Activated CD4-positive, alpha-beta memory T cell treated with anti-CD3 and anti-CD28 coated beads for 36 hours (primary cell): ENCODE measurements at regions of chr17 and their contacts with region 1.

Region 1: DNA sequence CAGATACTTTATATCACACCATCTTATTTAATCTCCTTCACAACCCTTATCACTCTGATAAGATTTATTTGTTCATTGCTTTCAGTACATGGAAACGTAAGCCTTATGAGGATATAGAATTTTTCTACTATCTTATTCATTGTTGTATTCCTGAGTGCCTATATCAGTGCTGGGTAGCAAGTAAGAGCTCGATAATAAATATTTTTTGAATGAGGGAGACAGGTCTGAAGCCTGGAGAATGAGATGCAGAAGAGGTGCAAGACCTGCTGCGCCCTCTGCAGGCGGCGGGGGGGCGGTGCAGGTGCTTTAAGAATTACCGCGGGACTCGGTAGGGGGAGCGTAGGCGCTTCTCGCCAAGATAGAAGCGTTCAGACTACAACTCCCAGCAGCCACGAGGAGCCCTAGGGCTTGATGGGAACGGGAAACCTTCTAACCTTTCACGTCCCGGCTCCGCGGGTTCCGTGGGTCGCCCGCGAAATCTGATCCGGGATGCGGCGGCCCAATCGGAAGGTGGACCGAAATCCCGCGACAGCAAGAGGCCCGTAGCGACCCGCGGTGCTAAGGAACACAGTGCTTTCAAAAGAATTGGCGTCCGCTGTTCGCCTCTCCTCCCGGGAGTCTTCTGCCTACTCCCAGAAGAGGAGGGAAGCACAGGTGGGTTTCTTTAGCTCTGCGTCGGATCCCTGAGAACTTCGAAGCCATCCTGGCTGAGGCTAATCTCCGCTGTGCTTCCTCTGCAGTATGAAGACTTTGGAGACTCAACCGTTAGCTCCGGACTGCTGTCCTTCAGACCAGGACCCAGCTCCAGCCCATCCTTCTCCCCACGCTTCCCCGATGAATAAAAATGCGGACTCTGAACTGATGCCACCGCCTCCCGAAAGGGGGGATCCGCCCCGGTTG is at the start of gene WRAP53:
- DNase-seq: peak; percentile 98
- H3K4me3 Mint-ChIP-seq: peak within 1 kb of the TSS; percentile 100
- H3K27ac Mint-ChIP-seq: peak within 1 kb of the TSS; percentile 100
- H3K4me1 Mint-ChIP-seq: peaks cover 31% of the 10 kb centered on the region
- H3K27me3 Mint-ChIP-seq: no peaks in the 10 kb centered on the region
- total RNA-seq, gene WRAP53: 20.2 to 23.3 TPM

Region 2: GRCh38 chr17:7252176-7253043 is 435.7 kb before region 1 on chr17 and contains the start of gene ELP5:
- CTCF ChIA-PET with region 1: no interaction called
- POLR2A ChIA-PET with region 1: interaction called, 3 read pairs
- intact Hi-C with region 1: loop called (anchors 5 kb)
- DNase-seq: peak; percentile 94
- H3K4me3 Mint-ChIP-seq: peak within 1 kb of the TSS; percentile 96
- H3K27ac Mint-ChIP-seq: peak within 1 kb of the TSS; percentile 100
- H3K4me1 Mint-ChIP-seq: peaks cover 40% of the 10 kb centered on the region
- H3K27me3 Mint-ChIP-seq: no peaks in the 10 kb centered on the region
- total RNA-seq, gene ELP5: 49.6 to 52.4 TPM

Region 3: GRCh38 chr17:7416323-7416722 is 271.8 kb before region 1 on chr17:
- CTCF ChIA-PET with region 1: no interaction called
- POLR2A ChIA-PET with region 1: no interaction called
- intact Hi-C with region 1: no loop called
- DNase-seq: no peak
- H3K4me3 Mint-ChIP-seq: no peak overlapping the region
- H3K27ac Mint-ChIP-seq: no peak overlapping the region
- H3K4me1 Mint-ChIP-seq: no peaks in the 10 kb centered on the region
- H3K27me3 Mint-ChIP-seq: no peaks in the 10 kb centered on the region

Region 4: DNA sequence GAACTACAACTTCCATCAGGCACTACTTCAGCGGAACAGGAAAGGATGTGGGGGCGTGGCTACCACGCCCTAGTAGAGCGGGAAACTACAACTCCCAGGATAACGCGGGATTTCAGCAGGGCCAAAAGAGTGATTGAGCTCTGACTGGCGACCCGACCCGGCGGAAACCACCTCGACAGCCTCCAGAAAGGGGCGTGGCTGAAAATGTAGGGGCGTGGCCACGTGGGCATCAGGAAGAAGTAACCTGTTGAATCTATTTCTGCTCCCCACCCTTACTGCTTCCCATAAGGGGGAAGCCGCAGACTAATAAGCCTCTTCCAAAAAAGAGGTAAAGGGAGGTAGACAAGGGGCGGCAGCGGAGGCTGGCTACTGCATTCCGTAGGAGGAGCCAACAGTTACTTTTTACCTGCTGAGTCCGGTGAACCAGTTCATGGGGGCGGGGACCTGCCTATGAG is 252.9 kb before region 1 on chr17 and contains the start of gene TMEM102:
- CTCF ChIA-PET with region 1: interaction called, 10 read pairs
- POLR2A ChIA-PET with region 1: interaction called, 22 read pairs
- intact Hi-C with region 1: loop called (anchors 1 kb)
- DNase-seq: peak; percentile 99
- H3K4me3 Mint-ChIP-seq: peak within 1 kb of the TSS; percentile 91
- H3K27ac Mint-ChIP-seq: peak within 1 kb of the TSS; percentile 95
- H3K4me1 Mint-ChIP-seq: peaks cover 36% of the 10 kb centered on the region
- H3K27me3 Mint-ChIP-seq: peaks cover 15% of the 10 kb centered on the region
- total RNA-seq, gene TMEM102: 11.4 to 11.6 TPM

Region 5: GRCh38 chr17:7583253-7584109 is 104.7 kb before region 1 on chr17 and contains the start of gene MPDU1:
- CTCF ChIA-PET with region 1: interaction called, 30 read pairs
- POLR2A ChIA-PET with region 1: interaction called, 56 read pairs
- intact Hi-C with region 1: loop called (anchors 1 kb)
- DNase-seq: peak; percentile 98
- H3K4me3 Mint-ChIP-seq: peak within 1 kb of the TSS; percentile 95
- H3K27ac Mint-ChIP-seq: peak within 1 kb of the TSS; percentile 100
- H3K4me1 Mint-ChIP-seq: peaks cover 57% of the 10 kb centered on the region
- H3K27me3 Mint-ChIP-seq: no peaks in the 10 kb centered on the region
- total RNA-seq, gene MPDU1: 52.6 to 52.9 TPM

Region 6: DNA sequence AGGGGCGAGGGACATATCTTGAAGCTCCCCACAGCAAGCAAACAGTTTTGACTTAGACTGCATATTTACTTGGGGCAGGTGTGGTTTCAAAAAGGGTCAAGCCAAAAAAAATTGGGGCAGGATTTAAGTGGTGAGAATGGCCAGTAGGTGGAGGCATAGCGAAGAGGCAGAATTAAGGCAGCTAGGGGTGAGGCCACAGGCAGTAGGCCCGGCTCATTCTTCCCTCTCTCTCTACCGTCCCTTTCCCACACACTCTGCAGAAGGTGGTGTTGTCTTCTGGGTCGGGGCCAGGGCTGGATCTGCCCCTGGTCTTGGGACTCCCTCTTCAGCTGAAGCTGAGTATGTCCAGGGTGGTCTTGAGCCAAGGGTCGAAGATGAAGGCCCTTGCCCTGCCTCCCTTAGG is 55.7 kb before region 1 on chr17:
- CTCF ChIA-PET with region 1: interaction called, 61 read pairs
- POLR2A ChIA-PET with region 1: interaction called, 24 read pairs
- intact Hi-C with region 1: loop called (anchors 1 kb)
- DNase-seq: peak; percentile 49
- H3K4me3 Mint-ChIP-seq: no peak overlapping the region
- H3K27ac Mint-ChIP-seq: no peak overlapping the region
- H3K4me1 Mint-ChIP-seq: peaks cover 2% of the 10 kb centered on the region
- H3K27me3 Mint-ChIP-seq: no peaks in the 10 kb centered on the region

Region 7: DNA sequence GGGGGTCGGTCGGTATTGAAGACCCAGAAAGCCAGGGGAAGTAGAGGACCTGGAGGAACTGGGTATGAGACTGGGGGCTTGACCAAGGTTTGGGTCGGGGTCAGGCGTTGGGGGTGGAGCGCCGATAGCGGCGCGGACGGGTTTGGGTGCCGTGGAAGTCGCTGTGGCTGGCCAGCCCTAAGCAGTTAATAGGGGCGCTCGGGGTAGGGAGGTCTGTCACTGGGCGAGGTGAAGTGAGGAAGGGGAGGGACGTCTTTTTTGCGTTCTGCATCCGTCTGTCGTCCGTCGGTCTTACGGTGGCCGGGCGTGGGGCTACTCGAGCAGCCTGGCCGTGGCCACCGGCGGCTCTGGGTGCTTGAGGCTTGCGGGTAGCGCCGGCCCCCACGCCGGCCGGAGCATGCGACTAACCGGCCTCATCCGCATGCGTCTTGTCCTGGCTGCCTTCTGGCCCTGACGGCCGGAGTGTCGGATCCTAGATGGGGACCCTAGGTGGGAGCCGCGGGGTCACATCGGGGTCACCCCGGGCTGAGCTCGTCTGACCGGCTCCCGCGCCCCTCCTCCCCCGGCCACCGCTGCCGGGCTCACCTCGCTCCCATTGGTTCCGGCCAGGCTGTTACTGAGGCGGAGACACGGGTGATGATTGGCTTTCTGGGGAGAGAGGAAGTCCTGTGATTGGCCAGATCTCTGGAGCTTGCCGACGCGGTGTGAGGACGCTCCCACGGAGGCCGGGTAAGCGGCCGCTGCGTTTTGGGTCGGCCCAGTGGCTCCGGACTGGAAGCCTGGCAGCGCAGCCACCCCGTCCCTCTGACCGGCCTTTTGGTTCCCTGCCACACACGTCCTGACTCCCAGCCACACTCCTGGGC is 156.4 kb after region 1 on chr17:
- CTCF ChIA-PET with region 1: interaction called, 7 read pairs
- POLR2A ChIA-PET with region 1: interaction called, 13 read pairs
- intact Hi-C with region 1: no loop called
- DNase-seq: peak; percentile 92
- H3K4me3 Mint-ChIP-seq: peak overlapping the region; percentile 85
- H3K27ac Mint-ChIP-seq: peak overlapping the region; percentile 95
- H3K4me1 Mint-ChIP-seq: peaks cover 45% of the 10 kb centered on the region
- H3K27me3 Mint-ChIP-seq: no peaks in the 10 kb centered on the region